ENCODE measurements at regions of chr17 and their contacts with region 1.

Region 1: GRCh38 chr17:40113110-40113906 is 8.5 kb upstream of the MSL1 start:
- DNase-seq: peak; percentile 86 to 95
- ATAC-seq: peak; percentile 70 to 79 (median 75)
- H3K4me3 ChIP-seq: peak overlapping the region in 9 of 10 donors; percentile 32 to 59 (median 49)
- H3K27ac ChIP-seq: peak overlapping the region; percentile 71 to 99 (median 93)
- H3K4me1 ChIP-seq: peaks cover 41 to 62% (median 58%) of the 10 kb centered on the region in 9 donors
- H3K27me3 ChIP-seq: no peaks in the 10 kb centered on the region
- CTCF ChIP-seq: peak; percentile 72 to 96 (median 84)

Region 2: GRCh38 chr17:40062329-40063186 is 50.8 kb before region 1 on chr17 and contains the start of gene THRA:
- intact Hi-C with region 1: loop called in 9 of 10 experiments (anchors 2 to 10 kb)
- DNase-seq: peak; percentile 76 to 83
- ATAC-seq: peak; percentile 54 to 92 (median 68)
- H3K4me3 ChIP-seq: peak within 1 kb of the TSS; percentile 85 to 100 (median 99)
- H3K27ac ChIP-seq: peak within 1 kb of the TSS; percentile 94 to 100 (median 98)
- H3K4me1 ChIP-seq: peaks cover 26 to 62% (median 56%) of the 10 kb centered on the region in 9 donors
- H3K27me3 ChIP-seq: no peaks in the 10 kb centered on the region
- CTCF ChIP-seq: peak in 5 of 9 donors; percentile 4 to 48 (median 20)
- total RNA-seq, gene THRA: 59.8 to 102 (median 69.7) TPM

Region 3: GRCh38 chr17:40139566-40140058 is 26.3 kb after region 1 on chr17:
- intact Hi-C with region 1: loop called in 1 of 10 experiments (anchors 2 kb)
- DNase-seq: no peak
- ATAC-seq: peak in 6 of 8 donors; percentile 2 to 28 (median 6)
- H3K4me3 ChIP-seq: peak overlapping the region; percentile 48 to 86 (median 66)
- H3K27ac ChIP-seq: peak overlapping the region; percentile 85 to 99 (median 96)
- H3K4me1 ChIP-seq: peaks cover 5 to 43% (median 30%) of the 10 kb centered on the region in 9 donors
- H3K27me3 ChIP-seq: no peaks in the 10 kb centered on the region
- CTCF ChIP-seq: no peak

Region 4: GRCh38 chr17:40287494-40288369 is 174.4 kb after region 1 on chr17 and contains the start of gene CDC6:
- intact Hi-C with region 1: loop called in 1 of 10 experiments (anchors 10 kb)
- DNase-seq: peak; percentile 97 to 99
- ATAC-seq: peak; percentile 97 to 99 (median 98)
- H3K4me3 ChIP-seq: peak within 1 kb of the TSS; percentile 23 to 76 (median 50)
- H3K27ac ChIP-seq: peak within 1 kb of the TSS in 5 of 10 donors; percentile 23 to 54 (median 37)
- H3K4me1 ChIP-seq: peaks cover 0 to 59% (median 33%) of the 10 kb centered on the region in 9 donors
- H3K27me3 ChIP-seq: no peaks in the 10 kb centered on the region
- CTCF ChIP-seq: no peak
- total RNA-seq, gene CDC6: 0.49 to 3.0 (median 0.86) TPM

Region 5: DNA sequence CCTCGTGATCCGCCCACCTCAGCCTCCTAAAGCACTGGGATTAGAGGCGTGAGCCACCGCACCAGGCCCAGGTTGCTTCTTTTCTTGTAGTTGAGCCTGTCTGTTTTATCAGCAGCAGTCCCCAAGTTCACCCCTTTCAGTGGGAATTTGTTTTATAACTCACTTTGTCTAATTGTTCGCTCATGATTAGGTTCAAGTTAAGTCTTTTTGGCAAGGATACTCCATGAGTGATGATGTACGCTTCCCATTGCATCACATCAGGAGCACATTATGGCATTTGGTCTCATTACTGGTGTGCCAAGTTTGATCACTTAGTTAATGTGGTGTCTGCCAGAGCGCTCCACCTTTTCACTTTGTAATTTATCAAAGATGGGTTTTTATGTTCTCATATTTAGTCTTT is 265.7 kb after region 1 on chr17:
- intact Hi-C with region 1: no loop called
- DNase-seq: no peak
- ATAC-seq: no peak
- H3K4me3 ChIP-seq: no peak overlapping the region
- H3K27ac ChIP-seq: no peak overlapping the region
- H3K4me1 ChIP-seq: no peaks in the 10 kb centered on the region
- H3K27me3 ChIP-seq: peaks cover 0 to 7% (median 0%) of the 10 kb centered on the region in 7 donors
- CTCF ChIP-seq: no peak

Region 6: DNA sequence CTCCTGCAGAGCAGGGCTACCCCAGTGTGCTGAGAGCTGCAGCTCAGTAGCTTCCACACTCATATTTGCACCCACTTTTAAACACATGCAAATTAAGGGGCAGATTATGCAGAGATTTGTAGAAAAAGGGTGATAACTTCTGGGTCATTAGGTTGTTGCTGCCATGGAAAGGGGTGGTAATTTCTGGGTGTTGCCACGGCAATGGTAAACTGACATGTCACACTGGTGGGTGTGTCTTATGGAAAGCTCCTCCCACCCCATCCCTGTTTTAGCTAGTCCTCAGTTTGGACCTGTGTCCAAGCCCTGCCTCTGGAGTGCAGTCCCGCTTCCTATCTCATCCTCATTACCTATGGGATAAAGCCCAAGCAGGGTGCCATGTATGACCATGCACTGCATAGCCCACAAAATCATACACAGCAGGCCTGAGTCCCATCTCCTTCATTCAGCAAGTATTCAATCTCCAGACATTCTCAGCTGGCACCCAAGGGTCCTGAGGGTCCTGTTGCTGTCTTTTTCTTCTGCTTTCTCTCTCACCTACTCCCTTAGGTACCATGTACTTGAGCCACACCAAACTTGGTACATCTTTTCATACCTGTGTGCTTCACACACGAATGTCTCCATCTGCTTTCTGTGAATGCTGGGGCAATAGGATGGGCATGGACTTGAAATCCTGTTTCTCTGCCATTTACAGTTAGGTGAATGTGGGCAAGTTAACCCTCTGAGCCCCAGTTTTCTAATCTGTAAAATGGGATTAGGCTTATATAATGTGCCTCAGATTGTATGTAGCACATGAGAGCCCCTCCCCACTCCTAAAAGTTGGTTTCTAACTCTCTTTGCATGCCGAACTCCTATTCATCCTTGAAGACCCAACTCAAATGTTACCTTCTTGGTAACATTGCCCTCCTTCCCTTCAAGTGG is 359.5 kb after region 1 on chr17:
- intact Hi-C with region 1: no loop called
- DNase-seq: no peak
- ATAC-seq: no peak
- H3K4me3 ChIP-seq: no peak overlapping the region
- H3K27ac ChIP-seq: no peak overlapping the region
- H3K4me1 ChIP-seq: peaks cover 0 to 14% (median 7%) of the 10 kb centered on the region in 9 donors
- H3K27me3 ChIP-seq: peaks cover 0 to 5% (median 0%) of the 10 kb centered on the region in 7 donors
- CTCF ChIP-seq: no peak